PC-3 (cell line): ENCODE measurements at regions of chr3 and their contacts with region 1.

Region 1: DNA sequence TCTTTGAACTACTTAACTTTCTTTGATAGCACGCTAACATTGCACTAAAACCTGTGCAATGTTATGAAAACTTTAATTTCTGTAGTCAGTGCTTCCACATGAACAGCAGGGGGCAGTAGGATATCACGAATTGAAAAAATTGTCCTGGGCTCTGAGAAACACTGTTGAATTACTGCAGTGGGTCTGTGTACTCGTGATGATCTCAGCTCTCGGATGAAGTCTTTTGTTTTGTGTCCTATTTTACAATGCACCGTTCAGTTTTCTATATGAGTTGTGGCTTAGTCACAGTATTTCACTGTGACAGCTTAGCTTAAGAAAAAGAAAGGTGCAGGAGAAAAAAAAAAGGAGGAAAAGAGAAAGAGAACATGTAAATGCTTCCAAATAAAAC is 141.3 kb upstream of the CCDC54 start:
- DNase-seq: peak; percentile 95
- ATAC-seq: peak; percentile 81
- H3K4me3 ChIP-seq: peak overlapping the region; percentile 73
- H3K27ac ChIP-seq: peak overlapping the region; percentile 28
- H3K4me1 ChIP-seq: peaks cover 15% of the 10 kb centered on the region
- H3K27me3 ChIP-seq: no peaks in the 10 kb centered on the region
- CTCF ChIP-seq: peak; percentile 98

Region 2: GRCh38 chr3:107206141-107206540 is 29.8 kb before region 1 on chr3:
- CTCF ChIA-PET with region 1: interaction called, 12 read pairs
- POLR2A ChIA-PET with region 1: no interaction called
- intact Hi-C with region 1: loop called (anchors 1 kb)
- DNase-seq: peak; percentile 86
- ATAC-seq: peak; percentile 44
- H3K4me3 ChIP-seq: no peak overlapping the region
- H3K27ac ChIP-seq: no peak overlapping the region
- H3K4me1 ChIP-seq: peaks cover 25% of the 10 kb centered on the region
- H3K27me3 ChIP-seq: no peaks in the 10 kb centered on the region
- CTCF ChIP-seq: peak; percentile 91

Region 3: GRCh38 chr3:107421170-107421792 is 185.4 kb after region 1 on chr3:
- CTCF ChIA-PET with region 1: interaction called, 11 read pairs
- POLR2A ChIA-PET with region 1: no interaction called
- intact Hi-C with region 1: loop called (anchors 1 kb)
- DNase-seq: peak; percentile 84
- ATAC-seq: peak; percentile 95
- H3K4me3 ChIP-seq: peak overlapping the region; percentile 65
- H3K27ac ChIP-seq: no peak overlapping the region
- H3K4me1 ChIP-seq: no peaks in the 10 kb centered on the region
- H3K27me3 ChIP-seq: no peaks in the 10 kb centered on the region
- CTCF ChIP-seq: peak; percentile 83

Region 4: GRCh38 chr3:107660306-107660976 is 424.5 kb after region 1 on chr3:
- CTCF ChIA-PET with region 1: interaction called, 3 read pairs
- POLR2A ChIA-PET with region 1: no interaction called
- intact Hi-C with region 1: loop called (anchors 10 kb)
- DNase-seq: peak; percentile 43
- ATAC-seq: no peak
- H3K4me3 ChIP-seq: no peak overlapping the region
- H3K27ac ChIP-seq: no peak overlapping the region
- H3K4me1 ChIP-seq: peaks cover 18% of the 10 kb centered on the region; the same call in 1 of the 2 replicates
- H3K27me3 ChIP-seq: no peaks in the 10 kb centered on the region
- CTCF ChIP-seq: peak; percentile 89

Region 5: GRCh38 chr3:107846279-107846852 is 610.4 kb after region 1 on chr3:
- CTCF ChIA-PET with region 1: no interaction called
- POLR2A ChIA-PET with region 1: no interaction called
- intact Hi-C with region 1: loop called (anchors 1 kb)
- DNase-seq: peak; percentile 80
- ATAC-seq: peak; percentile 94
- H3K4me3 ChIP-seq: peak overlapping the region; percentile 59
- H3K27ac ChIP-seq: no peak overlapping the region
- H3K4me1 ChIP-seq: peaks cover 14% of the 10 kb centered on the region
- H3K27me3 ChIP-seq: no peaks in the 10 kb centered on the region
- CTCF ChIP-seq: peak; percentile 90

Region 6: GRCh38 chr3:108477511-108478147 is 1241.7 kb after region 1 on chr3:
- CTCF ChIA-PET with region 1: no interaction called
- POLR2A ChIA-PET with region 1: interaction called, 3 read pairs
- intact Hi-C with region 1: loop called (anchors 5 kb)
- DNase-seq: peak; percentile 78
- ATAC-seq: peak; percentile 58
- H3K4me3 ChIP-seq: no peak overlapping the region
- H3K27ac ChIP-seq: no peak overlapping the region
- H3K4me1 ChIP-seq: peaks cover 20% of the 10 kb centered on the region
- H3K27me3 ChIP-seq: no peaks in the 10 kb centered on the region
- CTCF ChIP-seq: peak; percentile 91